Keratinocyte (primary cell): ENCODE measurements at regions of chr5 and their contacts with region 1.

Region 1: DNA sequence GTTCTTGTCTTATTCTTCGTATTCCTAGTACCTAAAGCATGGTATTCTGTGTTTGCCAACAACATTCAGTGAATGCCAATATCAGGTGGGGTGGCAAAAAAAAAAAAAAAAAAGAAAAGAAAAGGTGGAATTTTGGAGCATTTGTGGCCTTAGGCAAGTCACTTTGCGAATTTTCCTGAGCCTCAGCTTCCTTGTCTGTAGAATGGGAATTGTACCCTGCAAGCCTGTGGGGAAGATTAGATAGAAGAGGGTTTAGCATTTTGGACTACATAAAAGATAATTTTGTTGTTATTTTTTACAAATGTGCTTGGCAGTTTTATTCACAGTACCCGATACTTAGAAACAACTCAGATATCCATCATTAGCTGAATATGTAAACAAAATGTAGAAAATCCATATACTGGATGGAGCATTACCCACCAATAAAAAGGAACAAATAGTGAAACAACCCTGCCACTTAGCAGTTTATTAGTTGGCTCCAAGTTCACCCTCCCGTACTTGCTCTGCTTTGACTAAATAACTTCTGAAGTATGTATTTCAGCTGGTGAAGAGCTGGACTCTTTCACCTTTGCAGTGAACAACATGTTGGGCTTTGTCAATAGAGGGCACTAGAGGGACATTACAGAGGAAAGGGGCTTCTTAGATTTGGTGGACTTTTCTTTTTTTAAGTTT is 13.6 kb downstream of the UBE2D2 start:
- DNase-seq: no peak
- H3K4me3 ChIP-seq: no peak overlapping the region
- H3K27ac ChIP-seq: no peak overlapping the region
- H3K4me1 ChIP-seq: peaks cover 5% of the 10 kb centered on the region
- H3K27me3 ChIP-seq: no peaks in the 10 kb centered on the region
- CTCF ChIP-seq: peak; percentile 36 to 56 (median 55)

Region 2: GRCh38 chr5:139501381-139501780 is 73.4 kb before region 1 on chr5:
- dilution Hi-C with region 1: loop called (anchors 10 kb)
- DNase-seq: no peak
- H3K4me3 ChIP-seq: no peak overlapping the region
- H3K27ac ChIP-seq: no peak overlapping the region
- H3K4me1 ChIP-seq: no peaks in the 10 kb centered on the region
- H3K27me3 ChIP-seq: no peaks in the 10 kb centered on the region
- CTCF ChIP-seq: no peak